Colonic mucosa (tissue), 4 donors: ENCODE measurements at regions of chr12 and their contacts with region 1.

Region 1: GRCh38 chr12:45273717-45274271 is 57.9 kb downstream of the ANO6 start:
- DNase-seq: no peak
- H3K4me3 ChIP-seq: no peak overlapping the region
- H3K27ac ChIP-seq: no peak overlapping the region
- H3K4me1 ChIP-seq: no peaks in the 10 kb centered on the region
- H3K27me3 ChIP-seq: no peaks in the 10 kb centered on the region
- CTCF ChIP-seq: no peak

Region 2: GRCh38 chr12:44795970-44796369 is 477.8 kb before region 1 on chr12:
- intact Hi-C with region 1: no loop called
- DNase-seq: no peak
- H3K4me3 ChIP-seq: no peak overlapping the region
- H3K27ac ChIP-seq: no peak overlapping the region
- H3K4me1 ChIP-seq: no peaks in the 10 kb centered on the region
- H3K27me3 ChIP-seq: no peaks in the 10 kb centered on the region
- CTCF ChIP-seq: no peak

Region 3: GRCh38 chr12:45050751-45051571 is 222.8 kb before region 1 on chr12 and contains the start of gene DBX2:
- intact Hi-C with region 1: no loop called
- DNase-seq: no peak
- H3K4me3 ChIP-seq: no peak within 1 kb of the TSS
- H3K27ac ChIP-seq: no peak within 1 kb of the TSS
- H3K4me1 ChIP-seq: no peaks in the 10 kb centered on the region
- H3K27me3 ChIP-seq: peaks cover 18% of the 10 kb centered on the region
- CTCF ChIP-seq: no peak
- total RNA-seq, gene DBX2: not detected

Region 4: DNA sequence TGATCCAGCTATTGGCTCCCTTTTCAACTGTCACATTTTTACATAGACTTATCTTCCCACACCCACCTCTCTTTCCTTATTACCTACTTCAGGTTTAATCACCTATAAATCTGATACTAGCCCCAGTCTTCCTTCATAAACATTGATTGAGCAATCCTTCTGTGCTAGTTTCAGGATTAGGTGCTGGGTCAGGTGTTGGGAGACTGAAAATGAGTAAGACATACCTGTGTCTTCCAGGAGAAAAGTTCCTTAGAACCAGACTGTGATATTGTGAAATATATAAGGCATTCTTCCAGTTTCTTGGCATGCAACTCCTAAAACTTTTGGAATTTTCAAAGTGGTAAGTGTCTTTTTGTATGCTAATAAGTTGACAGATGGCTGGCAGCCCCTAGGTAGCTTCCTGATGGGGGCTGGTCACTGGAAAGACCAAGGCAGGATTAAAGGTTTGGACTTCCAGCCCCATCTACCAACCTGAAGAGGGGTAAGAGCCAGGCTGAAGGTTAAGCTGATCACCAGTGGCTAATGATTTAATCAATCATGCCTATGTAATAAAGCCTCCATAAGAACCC is 53.3 kb before region 1 on chr12:
- intact Hi-C with region 1: loop called (anchors 10 kb)
- DNase-seq: no peak
- H3K4me3 ChIP-seq: no peak overlapping the region
- H3K27ac ChIP-seq: no peak overlapping the region
- H3K4me1 ChIP-seq: no peaks in the 10 kb centered on the region
- H3K27me3 ChIP-seq: no peaks in the 10 kb centered on the region
- CTCF ChIP-seq: no peak